ENCODE measurements at regions of chr1 and their contacts with region 1.

Region 1: GRCh38 chr1:156385534-156386031 is 16.6 kb downstream of the RHBG start:
- DNase-seq: peak in 1 of 2 experiments; percentile 45
- H3K4me3 ChIP-seq: no peak overlapping the region
- H3K27ac ChIP-seq: no peak overlapping the region
- H3K4me1 ChIP-seq: no peaks in the 10 kb centered on the region
- H3K27me3 ChIP-seq: no peaks in the 10 kb centered on the region
- CTCF ChIP-seq: peak; percentile 100

Region 2: DNA sequence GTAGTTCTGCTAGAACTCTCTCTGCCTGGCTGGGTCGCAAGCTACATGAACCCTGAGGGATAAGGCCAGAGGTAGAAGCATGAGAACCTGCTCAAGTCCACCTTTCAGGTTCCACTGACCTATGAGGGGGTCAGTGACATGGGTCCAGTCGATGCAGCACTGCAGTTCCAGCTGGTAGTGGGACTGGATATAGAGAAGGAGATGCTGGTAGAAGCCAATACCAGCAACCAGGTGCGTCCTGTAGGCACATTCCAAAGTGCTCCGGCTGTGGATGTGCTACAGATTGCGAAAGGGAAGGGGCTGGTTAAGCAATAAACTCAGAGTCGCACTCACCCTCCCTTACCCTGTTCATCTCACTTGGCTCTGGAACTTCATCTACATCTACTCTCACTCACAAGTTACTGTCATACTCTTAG is 108.6 kb before region 1 on chr1:
- CTCF ChIA-PET with region 1: interaction called, 11 read pairs
- POLR2A ChIA-PET with region 1: no interaction called
- intact Hi-C with region 1: no loop called
- DNase-seq: no peak
- H3K4me3 ChIP-seq: no peak overlapping the region
- H3K27ac ChIP-seq: no peak overlapping the region
- H3K4me1 ChIP-seq: peaks cover 10% of the 10 kb centered on the region
- H3K27me3 ChIP-seq: no peaks in the 10 kb centered on the region
- CTCF ChIP-seq: no peak

Region 3: DNA sequence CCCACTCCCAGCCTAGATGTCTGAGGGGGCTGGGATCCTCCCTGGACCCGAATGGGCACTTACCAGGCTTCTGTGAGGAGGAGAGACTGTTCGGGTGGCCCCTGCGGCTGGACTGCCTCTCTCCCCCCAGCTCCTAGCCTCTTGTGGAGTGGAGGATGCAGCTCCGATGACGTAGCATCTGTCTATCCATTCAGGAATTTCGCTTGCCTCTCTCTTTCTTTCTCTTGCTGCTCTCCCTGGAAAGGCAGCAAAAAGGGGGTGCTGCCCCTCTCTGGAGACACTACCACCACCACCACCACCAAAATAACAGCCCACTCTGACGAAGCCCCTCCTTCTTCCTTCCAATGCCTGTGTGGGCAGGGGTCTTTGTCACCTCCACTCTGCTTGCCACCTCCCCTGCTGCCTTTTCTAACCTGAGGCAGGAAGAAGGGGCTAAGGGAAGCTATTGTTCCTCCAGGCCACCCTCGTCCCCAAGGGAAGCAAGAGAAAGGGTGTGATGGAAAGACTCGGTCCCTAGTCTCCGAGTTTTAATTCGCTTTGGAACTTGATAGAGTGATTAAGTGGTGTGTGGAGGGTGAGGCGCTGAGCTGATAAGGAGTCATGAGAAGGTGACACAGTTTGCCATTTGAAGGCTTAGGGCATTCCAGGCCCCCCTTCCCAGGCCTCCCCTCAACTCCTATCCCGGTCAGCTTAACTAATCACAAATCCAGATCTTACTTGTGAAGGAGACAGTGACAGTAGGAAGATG is 43.9 kb after region 1 on chr1:
- CTCF ChIA-PET with region 1: interaction called, 11 read pairs
- POLR2A ChIA-PET with region 1: no interaction called
- intact Hi-C with region 1: no loop called
- DNase-seq: no peak
- H3K4me3 ChIP-seq: no peak overlapping the region
- H3K27ac ChIP-seq: no peak overlapping the region
- H3K4me1 ChIP-seq: no peaks in the 10 kb centered on the region
- H3K27me3 ChIP-seq: peaks cover 65% of the 10 kb centered on the region
- CTCF ChIP-seq: no peak

Region 4: DNA sequence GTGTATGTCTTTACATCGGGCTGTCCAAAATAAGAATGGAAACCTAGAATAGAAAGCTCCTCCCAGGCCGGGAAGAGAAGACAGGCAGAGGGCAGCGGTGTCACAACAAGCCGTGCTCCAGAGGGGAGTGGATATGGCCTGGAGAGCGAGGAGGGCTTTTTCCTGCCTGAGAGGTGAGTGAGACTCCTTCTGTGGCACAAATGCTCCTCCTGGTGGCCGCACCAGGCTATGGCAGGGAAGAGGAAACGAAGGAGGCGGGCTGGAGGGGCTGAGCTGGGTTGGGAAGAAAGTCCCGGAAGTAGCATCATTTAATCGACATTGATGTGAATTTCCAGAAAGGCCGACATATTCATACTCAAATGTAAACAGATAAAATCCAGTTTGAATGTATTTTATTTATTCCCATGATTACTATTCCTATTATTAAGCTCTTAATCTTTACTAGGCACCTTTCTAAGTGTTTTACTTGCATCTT is 60.2 kb after region 1 on chr1:
- CTCF ChIA-PET with region 1: interaction called, 74 read pairs
- POLR2A ChIA-PET with region 1: interaction called, 4 read pairs
- intact Hi-C with region 1: loop called (anchors 1 kb)
- DNase-seq: peak; percentile 68 to 88
- H3K4me3 ChIP-seq: no peak overlapping the region
- H3K27ac ChIP-seq: no peak overlapping the region
- H3K4me1 ChIP-seq: no peaks in the 10 kb centered on the region
- H3K27me3 ChIP-seq: peaks cover 8% of the 10 kb centered on the region
- CTCF ChIP-seq: peak; percentile 98

Region 5: DNA sequence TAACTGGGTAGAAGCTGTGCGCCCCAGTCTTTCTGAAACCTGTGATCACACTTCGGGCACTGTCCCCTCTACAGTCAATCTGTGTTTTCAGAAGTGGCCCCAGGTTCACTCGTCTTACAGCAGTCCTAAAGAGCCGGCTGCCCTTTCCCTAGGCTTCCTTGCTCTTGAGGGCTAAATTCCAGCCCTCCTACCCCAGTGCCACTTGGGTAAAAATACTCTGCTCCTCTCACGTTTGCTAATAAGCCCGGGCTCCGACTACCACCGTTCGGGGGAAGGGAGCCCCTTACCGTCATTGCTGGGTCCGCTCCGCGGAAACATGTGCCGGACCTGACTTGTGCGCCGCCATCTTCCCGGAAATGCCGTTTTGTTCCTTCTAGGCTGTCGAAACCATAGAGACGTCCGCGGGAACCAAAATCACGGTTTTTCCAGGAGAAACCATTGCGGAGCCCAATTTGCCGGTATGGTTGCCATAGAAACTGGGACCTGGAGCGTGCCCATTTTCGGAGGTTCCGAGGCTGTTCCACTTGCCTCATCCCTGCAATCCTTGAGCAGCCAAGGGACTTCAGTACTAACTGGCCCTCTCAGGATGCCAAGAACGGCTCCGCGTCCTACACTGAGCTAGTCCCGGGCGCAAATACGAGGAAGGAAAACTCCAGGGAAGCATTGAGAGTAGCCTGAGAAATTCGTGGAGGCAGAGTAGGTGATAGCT is 215.7 kb after region 1 on chr1 and contains the start of gene GPATCH4:
- CTCF ChIA-PET with region 1: interaction called, 12 read pairs
- POLR2A ChIA-PET with region 1: no interaction called
- intact Hi-C with region 1: no loop called
- DNase-seq: peak; percentile 63 to 65
- H3K4me3 ChIP-seq: peak within 1 kb of the TSS; percentile 77
- H3K27ac ChIP-seq: peak within 1 kb of the TSS; percentile 70
- H3K4me1 ChIP-seq: peaks cover 16% of the 10 kb centered on the region
- H3K27me3 ChIP-seq: no peaks in the 10 kb centered on the region
- CTCF ChIP-seq: no peak
- total RNA-seq, gene GPATCH4: 17.5 and 17.6 TPM in 2 replicates

Region 6: GRCh38 chr1:156705918-156706656 is 320.5 kb after region 1 on chr1:
- CTCF ChIA-PET with region 1: no interaction called
- POLR2A ChIA-PET with region 1: interaction called, 13 read pairs
- intact Hi-C with region 1: no loop called
- DNase-seq: peak in 1 of 2 experiments; percentile 86
- H3K4me3 ChIP-seq: peak overlapping the region; percentile 79
- H3K27ac ChIP-seq: 0 out of 2 replicates have a peak overlapping the region, but pooled peaks have one; percentile 55
- H3K4me1 ChIP-seq: peaks cover 47% of the 10 kb centered on the region
- H3K27me3 ChIP-seq: no peaks in the 10 kb centered on the region
- CTCF ChIP-seq: peak; percentile 98

Region 7: DNA sequence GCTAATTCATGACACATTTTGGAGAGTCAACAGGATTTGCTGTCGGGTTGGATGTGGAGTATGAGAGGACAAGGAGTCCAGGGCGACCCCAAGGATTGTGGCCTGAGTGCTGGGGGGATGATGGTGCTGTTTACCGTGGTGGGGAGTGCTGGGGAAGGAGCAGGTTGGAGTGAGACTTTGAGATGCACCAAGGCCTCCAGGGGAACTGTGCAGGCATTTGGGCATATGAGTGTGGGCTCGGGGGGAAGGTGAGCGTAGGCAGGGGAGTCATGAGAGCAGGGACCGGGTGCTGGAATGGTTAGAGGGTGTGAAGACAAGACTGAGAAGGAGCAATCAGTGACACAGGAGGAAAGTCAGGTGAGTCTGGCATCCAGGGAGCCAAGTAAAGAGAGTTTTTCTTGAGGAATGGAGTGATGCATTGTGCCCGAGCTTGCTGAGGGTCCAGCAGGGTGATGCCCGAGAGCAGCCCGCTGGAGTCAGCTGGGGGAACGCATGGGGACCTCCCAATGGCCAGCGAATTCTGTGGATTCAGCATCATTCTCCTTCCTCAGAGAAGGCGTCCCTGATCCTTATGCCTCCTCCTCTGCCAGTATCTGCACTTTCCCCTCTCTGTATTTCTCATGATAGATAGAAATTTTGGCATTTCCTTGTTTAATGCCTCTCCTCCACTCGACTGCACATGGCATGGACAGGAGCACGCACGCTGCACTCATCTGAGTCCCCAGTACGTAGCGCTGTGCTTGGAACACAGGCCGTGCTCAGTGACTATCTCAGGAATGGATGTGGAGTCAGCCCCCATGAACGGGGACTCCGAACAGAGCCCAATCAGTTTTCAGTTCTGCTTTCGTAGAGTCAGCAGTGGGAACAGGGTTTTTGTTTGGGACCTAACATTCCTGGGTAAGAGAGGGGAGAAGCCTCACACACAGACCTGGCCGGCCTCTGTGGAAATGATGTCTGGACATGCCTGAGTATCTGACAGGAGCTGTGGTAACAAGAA is 804.7 kb after region 1 on chr1:
- CTCF ChIA-PET with region 1: no interaction called
- POLR2A ChIA-PET with region 1: no interaction called
- intact Hi-C with region 1: no loop called
- DNase-seq: no peak
- H3K4me3 ChIP-seq: no peak overlapping the region
- H3K27ac ChIP-seq: no peak overlapping the region
- H3K4me1 ChIP-seq: no peaks in the 10 kb centered on the region
- H3K27me3 ChIP-seq: peaks cover 86% of the 10 kb centered on the region
- CTCF ChIP-seq: no peak

Measured in PC-9 (cell line).